Activated CD4-positive, alpha-beta T cell treated with anti-CD3 and anti-CD28 coated beads for 36 hours (primary cell): ENCODE measurements at regions of chr13 and their contacts with region 1.

Region 1: GRCh38 chr13:20359335-20359734 is 127.2 kb upstream of the GJB6 start:
- DNase-seq: no peak
- ATAC-seq: peak; percentile 97
- H3K4me3 Mint-ChIP-seq: no peak overlapping the region
- H3K27ac Mint-ChIP-seq: no peak overlapping the region
- H3K4me1 Mint-ChIP-seq: peaks cover 10% of the 10 kb centered on the region
- H3K27me3 Mint-ChIP-seq: no peaks in the 10 kb centered on the region

Region 2: DNA sequence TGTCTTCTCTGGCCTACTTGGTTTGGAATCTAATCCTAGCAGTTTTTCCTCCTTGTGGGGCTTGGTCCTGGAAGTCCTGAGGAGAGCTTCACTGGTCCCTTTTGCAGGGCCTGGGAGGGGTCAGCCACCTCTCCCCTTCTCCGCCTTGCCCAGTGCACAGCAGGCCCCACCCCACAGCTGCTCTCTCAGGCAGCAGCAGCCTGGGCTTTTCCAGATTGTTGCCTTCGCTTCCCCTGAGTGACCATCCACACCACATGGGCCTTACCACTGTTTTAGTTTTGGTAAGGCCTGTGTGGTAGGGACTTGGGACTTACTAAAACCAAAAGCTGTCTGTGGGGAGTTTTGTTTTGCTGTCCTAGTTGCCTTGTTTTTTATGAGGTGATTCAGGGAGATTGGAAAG is 714.3 kb before region 1 on chr13:
- CTCF ChIA-PET with region 1: no interaction called
- POLR2A ChIA-PET with region 1: no interaction called
- intact Hi-C with region 1: no loop called
- DNase-seq: no peak
- ATAC-seq: no peak
- H3K4me3 Mint-ChIP-seq: no peak overlapping the region
- H3K27ac Mint-ChIP-seq: peak overlapping the region; percentile 20
- H3K4me1 Mint-ChIP-seq: peaks cover 28% of the 10 kb centered on the region
- H3K27me3 Mint-ChIP-seq: no peaks in the 10 kb centered on the region

Region 3: DNA sequence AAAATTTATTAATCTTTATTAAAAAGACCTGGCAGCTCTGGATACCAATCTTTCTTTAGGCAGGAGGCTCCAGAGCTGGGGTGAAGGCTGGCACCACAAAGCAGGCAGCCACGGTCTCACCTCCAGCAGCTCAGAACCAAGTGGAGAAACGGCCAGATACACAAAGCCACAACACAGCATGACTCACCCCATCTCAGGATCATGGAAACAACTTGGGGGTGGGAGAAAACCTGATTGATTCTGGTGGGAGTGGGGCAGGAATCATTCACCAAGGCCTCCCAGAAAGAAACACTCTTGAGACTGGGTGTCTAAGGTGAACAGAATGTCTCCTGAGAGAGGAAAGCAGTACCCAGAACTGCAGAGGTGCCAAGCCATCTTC is 102.1 kb after region 1 on chr13:
- CTCF ChIA-PET with region 1: interaction called, 3 read pairs
- POLR2A ChIA-PET with region 1: no interaction called
- intact Hi-C with region 1: loop called in 1 of 2 experiments (anchors 5 kb)
- DNase-seq: peak; percentile 59
- ATAC-seq: peak; percentile 83
- H3K4me3 Mint-ChIP-seq: no peak overlapping the region
- H3K27ac Mint-ChIP-seq: peak overlapping the region; percentile 74
- H3K4me1 Mint-ChIP-seq: peaks cover 41% of the 10 kb centered on the region
- H3K27me3 Mint-ChIP-seq: no peaks in the 10 kb centered on the region